PC-3 (cell line): ENCODE measurements at regions of chr7 and their contacts with region 1.

Region 1: GRCh38 chr7:43647673-43648472 is 65.0 kb downstream of the STK17A start:
- DNase-seq: peak; percentile 98
- ATAC-seq: peak; percentile 64
- H3K4me3 ChIP-seq: peak overlapping the region; percentile 33; the same call in 1 of the 2 replicates
- H3K27ac ChIP-seq: peak overlapping the region; percentile 99
- H3K4me1 ChIP-seq: peaks cover 73% of the 10 kb centered on the region
- H3K27me3 ChIP-seq: no peaks in the 10 kb centered on the region
- CTCF ChIP-seq: no peak

Region 2: DNA sequence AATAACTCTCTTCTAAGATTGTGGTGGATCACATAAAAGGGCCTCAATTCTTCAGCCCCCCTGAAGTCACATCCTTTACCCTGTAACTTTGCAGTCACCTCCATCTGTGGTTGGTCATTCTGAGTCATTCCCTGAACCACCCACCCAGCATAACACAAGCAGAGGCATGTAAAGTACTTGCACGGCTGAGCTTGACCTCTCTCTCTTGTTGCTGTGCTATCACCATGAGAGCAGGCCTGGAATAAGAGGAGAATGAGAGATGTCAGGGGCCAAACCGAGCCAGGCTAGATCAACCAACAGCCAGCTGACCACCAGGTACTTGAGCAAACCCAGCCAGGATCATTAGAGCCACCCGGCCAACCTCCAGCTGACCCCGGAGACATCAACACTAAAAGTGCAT is 78.4 kb before region 1 on chr7:
- CTCF ChIA-PET with region 1: no interaction called
- POLR2A ChIA-PET with region 1: no interaction called
- intact Hi-C with region 1: no loop called
- DNase-seq: peak; percentile 64
- ATAC-seq: peak; percentile 45
- H3K4me3 ChIP-seq: no peak overlapping the region
- H3K27ac ChIP-seq: peak overlapping the region; percentile 97
- H3K4me1 ChIP-seq: peaks cover 49% of the 10 kb centered on the region
- H3K27me3 ChIP-seq: no peaks in the 10 kb centered on the region
- CTCF ChIP-seq: no peak

Region 3: DNA sequence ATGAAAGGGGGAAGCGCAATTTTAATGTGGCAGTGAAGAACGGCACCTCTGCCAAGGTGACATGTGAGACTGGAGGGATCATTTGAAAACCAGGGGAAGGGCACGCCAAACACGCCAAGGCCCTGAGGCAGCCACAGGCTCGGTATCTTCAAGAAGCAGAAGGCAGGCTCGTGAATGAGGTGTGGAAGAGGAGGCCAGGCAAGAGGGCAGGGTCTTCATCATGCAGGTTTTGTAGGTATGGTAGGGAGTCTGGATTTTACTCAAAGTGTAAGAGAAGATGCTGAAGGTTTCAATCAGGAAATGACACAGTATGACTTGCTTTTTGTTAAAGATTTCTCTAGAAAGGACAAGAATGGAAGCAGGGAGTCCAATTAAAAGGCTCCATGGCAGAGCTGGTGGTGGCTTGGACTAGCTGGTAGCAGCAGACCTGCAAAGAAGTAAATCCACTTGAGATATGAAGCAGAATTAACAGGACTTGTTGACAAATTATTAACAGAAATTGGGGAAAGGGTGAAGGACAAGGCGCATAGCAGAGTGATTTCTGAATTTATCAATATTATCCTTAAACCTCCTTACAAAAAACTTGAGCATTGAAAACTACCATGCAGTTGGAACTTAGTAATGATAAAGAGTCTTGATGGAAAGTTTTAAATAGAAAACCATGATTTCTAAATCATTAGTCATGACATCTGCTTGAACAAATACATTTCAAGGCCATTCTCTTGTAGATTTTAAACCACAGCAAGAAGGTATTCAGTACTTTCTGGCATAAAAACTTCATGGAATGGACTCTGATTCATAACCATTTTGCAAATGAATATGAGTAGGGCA is 11.1 kb after region 1 on chr7:
- CTCF ChIA-PET with region 1: interaction called, 3 read pairs
- POLR2A ChIA-PET with region 1: no interaction called
- intact Hi-C with region 1: loop called (anchors 1 kb)
- DNase-seq: peak; percentile 86
- ATAC-seq: peak; percentile 82
- H3K4me3 ChIP-seq: peak overlapping the region; percentile 34
- H3K27ac ChIP-seq: peak overlapping the region; percentile 96
- H3K4me1 ChIP-seq: peaks cover 37% of the 10 kb centered on the region
- H3K27me3 ChIP-seq: no peaks in the 10 kb centered on the region
- CTCF ChIP-seq: no peak

Region 4: GRCh38 chr7:43674584-43675436 is 26.9 kb after region 1 on chr7:
- CTCF ChIA-PET with region 1: no interaction called
- POLR2A ChIA-PET with region 1: no interaction called
- intact Hi-C with region 1: loop called (anchors 1 kb)
- DNase-seq: peak; percentile 90
- ATAC-seq: peak; percentile 98
- H3K4me3 ChIP-seq: no peak overlapping the region
- H3K27ac ChIP-seq: peak overlapping the region; percentile 78
- H3K4me1 ChIP-seq: peaks cover 13% of the 10 kb centered on the region
- H3K27me3 ChIP-seq: no peaks in the 10 kb centered on the region
- CTCF ChIP-seq: no peak

Region 5: DNA sequence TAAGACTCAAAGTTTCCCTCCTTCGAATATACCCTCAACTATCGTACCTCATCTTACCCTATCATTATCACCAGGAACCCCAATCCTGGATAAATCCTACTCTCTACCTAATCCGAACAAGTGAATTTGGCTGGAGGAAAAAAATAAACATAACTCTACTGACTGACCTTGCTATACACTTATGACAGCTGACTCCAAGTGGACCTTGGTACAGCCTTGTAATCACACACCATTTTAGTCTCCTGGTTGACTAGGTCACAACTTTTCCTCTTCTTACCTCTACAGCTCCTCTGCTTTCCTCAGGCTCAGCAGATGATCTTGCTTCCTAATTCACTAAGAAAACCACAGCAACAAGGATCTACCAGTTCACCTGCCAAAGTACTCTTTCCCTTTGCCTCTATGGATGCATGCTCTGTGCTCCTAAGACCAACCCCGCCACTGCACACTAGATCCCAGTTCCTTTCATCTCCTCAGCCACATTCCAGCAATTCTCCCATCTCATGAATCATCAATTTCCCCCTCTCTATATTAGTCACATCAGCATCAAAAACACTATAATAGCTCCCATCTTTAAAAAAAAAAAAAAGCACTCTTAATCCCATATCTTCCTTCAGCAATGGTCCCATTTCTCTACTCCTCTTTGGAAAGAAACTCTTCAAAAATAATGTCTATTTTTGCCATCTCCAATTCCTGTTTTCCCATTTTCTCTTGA is 46.0 kb after region 1 on chr7:
- CTCF ChIA-PET with region 1: interaction called, 4 read pairs
- POLR2A ChIA-PET with region 1: no interaction called
- intact Hi-C with region 1: loop called (anchors 2 kb)
- DNase-seq: peak; percentile 66
- ATAC-seq: peak; percentile 44
- H3K4me3 ChIP-seq: no peak overlapping the region
- H3K27ac ChIP-seq: peak overlapping the region; percentile 75
- H3K4me1 ChIP-seq: peaks cover 56% of the 10 kb centered on the region
- H3K27me3 ChIP-seq: no peaks in the 10 kb centered on the region
- CTCF ChIP-seq: no peak

Region 6: GRCh38 chr7:43834463-43835251 is 186.8 kb after region 1 on chr7:
- CTCF ChIA-PET with region 1: no interaction called
- POLR2A ChIA-PET with region 1: no interaction called
- intact Hi-C with region 1: loop called (anchors 5 kb)
- DNase-seq: peak; percentile 46
- ATAC-seq: no peak
- H3K4me3 ChIP-seq: no peak overlapping the region
- H3K27ac ChIP-seq: no peak overlapping the region
- H3K4me1 ChIP-seq: 0 out of 2 replicates have a peak, but pooled peaks cover 3% of the 10 kb centered on the region
- H3K27me3 ChIP-seq: no peaks in the 10 kb centered on the region
- CTCF ChIP-seq: no peak

Region 7: DNA sequence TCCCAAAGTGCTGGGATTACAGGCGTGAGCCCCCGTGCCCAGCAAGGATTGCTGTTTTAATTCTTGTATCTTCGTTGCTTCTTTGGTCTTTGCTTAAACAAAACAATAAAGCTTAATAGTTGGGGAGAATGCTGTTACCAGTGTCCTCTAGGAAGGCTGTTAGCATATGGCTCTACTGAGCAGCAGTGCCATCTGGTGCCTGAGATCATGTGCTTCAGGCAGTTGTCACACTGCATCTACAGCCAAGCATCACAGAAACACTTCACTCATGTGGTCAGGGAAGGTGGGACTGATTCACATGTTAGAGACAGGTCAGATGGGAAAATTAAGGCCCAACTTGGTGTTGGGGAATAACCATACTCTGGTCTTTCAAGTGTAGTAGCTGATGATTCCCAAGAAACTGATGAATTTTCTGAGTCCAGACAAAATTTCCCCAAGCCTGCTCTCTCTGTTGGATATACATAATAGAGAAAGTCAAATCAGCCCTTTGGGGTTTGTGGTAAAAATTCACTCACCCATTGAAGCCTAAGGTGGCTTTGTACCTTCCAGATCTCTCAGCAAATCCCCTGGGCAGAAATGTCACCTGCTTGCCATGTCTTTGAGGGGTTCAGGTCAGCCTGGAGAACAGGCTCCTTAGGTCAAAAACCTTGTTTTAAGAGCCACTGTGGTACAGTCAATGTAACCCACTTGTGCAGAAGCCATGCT is 306.8 kb after region 1 on chr7:
- CTCF ChIA-PET with region 1: no interaction called
- POLR2A ChIA-PET with region 1: no interaction called
- intact Hi-C with region 1: no loop called
- DNase-seq: peak; percentile 69
- ATAC-seq: peak; percentile 100
- H3K4me3 ChIP-seq: no peak overlapping the region
- H3K27ac ChIP-seq: no peak overlapping the region
- H3K4me1 ChIP-seq: no peaks in the 10 kb centered on the region
- H3K27me3 ChIP-seq: no peaks in the 10 kb centered on the region
- CTCF ChIP-seq: peak; percentile 83